Activated T-helper 2 cell treated with anti-CD3 and anti-CD28 coated beads, Interferon-gamma antibody, Interleukin-2, Interleukin-4, amounts not matched to agents 10 μg/mL and 5 μg/mL and 100 μg/mL, durations not matched to agents 14 hours and 24 hours and 36 hours (primary cell): ENCODE measurements at regions of chr3 and their contacts with region 1.

Region 1: DNA sequence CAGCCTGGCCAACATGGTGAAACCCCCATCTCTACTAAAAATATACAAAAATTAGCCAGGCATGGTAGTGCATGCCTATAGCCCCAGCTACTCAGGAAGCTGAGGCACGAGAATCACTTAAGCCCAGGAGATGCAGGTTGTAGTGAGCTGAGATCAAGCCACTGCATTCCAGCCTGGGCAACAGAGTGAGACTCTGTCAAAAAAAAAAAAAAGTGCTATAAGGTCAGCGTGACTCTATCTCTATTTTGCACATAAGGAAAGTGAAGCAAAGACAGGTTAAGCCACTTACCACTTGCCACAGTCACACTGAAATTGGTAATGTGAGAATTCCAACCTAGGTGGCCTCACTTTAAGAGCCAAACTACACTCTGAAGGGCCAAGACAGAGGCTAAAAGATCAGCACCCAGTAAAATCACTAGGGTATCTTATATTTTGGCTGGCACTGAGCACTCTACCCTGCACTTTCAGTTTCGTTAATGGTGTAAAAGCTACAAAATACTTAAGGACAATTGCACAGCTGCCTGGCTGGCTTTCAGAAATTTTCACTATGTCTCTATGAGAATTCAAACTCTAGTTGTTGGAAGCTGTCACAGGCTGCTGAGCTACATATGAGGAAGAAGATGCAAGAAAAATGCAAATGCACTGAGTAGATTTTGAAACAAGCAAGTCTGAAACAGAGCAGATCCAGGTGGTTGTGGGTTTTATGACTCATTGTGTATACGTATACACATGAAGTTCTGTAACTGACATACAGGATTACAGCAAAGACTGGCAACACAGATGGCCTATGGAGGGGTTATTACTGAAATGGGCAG is 32.7 kb downstream of the TRANK1 start:
- DNase-seq: peak; percentile 31
- H3K4me3 Mint-ChIP-seq: peak overlapping the region; percentile 41
- H3K27ac Mint-ChIP-seq: peak overlapping the region; percentile 20
- H3K4me1 Mint-ChIP-seq: peaks cover 40% of the 10 kb centered on the region
- H3K27me3 Mint-ChIP-seq: peaks cover 3% of the 10 kb centered on the region

Region 2: DNA sequence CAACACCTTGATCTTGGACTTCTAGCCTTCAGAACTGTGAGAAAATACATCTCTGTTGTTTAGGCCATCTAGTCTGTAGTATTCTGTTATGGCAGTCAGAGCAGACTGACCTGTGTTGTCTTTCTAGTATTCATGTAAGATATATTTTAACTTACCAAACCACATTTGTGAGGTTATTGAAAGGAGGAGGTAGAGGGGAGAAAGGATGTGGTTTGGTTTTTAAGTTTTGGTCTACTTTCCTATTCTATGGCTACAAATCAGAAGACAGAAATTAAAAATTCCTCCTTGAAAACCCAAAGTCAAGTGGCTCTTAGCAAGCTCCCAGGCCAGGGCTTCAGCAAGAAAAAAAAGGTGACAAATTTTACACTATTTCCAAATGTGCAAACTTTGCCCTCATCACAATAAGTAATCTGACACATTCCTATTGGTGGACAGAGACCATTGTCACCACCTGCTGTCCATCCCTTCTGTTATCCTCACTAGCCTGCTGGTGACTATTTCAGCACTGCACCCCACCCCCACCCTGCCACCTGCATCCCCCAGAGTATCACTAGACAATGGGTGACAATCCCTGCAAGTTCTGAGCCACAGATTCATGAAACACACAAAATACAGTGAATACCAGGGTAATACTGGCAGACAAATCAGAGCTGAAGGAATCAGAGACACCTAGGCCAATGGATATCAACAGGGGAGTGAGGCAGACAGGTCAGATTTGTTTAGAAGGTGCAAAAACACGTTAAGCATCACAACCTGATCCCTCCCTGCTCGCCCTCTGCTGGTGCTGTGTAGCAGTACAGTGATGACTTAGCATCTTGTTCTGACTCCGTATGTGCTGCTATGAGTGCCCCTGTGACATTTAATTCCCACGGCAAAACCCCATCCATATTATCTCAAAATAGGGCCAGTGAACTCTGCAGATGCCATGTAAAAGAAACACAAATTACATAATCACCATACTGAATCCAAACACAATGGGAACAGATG is 68.8 kb before region 1 on chr3:
- intact Hi-C with region 1: loop called (anchors 2 kb)
- DNase-seq: peak; percentile 36
- H3K4me3 Mint-ChIP-seq: peak overlapping the region; percentile 6
- H3K27ac Mint-ChIP-seq: no peak overlapping the region
- H3K4me1 Mint-ChIP-seq: peaks cover 30% of the 10 kb centered on the region
- H3K27me3 Mint-ChIP-seq: peaks cover 2% of the 10 kb centered on the region

Region 3: GRCh38 chr3:36876181-36876936 is 35.8 kb before region 1 on chr3:
- intact Hi-C with region 1: loop called (anchors 1 kb)
- DNase-seq: peak; percentile 28
- H3K4me3 Mint-ChIP-seq: peak overlapping the region; percentile 48
- H3K27ac Mint-ChIP-seq: peak overlapping the region; percentile 72
- H3K4me1 Mint-ChIP-seq: peaks cover 27% of the 10 kb centered on the region
- H3K27me3 Mint-ChIP-seq: peaks cover 20% of the 10 kb centered on the region

Region 4: DNA sequence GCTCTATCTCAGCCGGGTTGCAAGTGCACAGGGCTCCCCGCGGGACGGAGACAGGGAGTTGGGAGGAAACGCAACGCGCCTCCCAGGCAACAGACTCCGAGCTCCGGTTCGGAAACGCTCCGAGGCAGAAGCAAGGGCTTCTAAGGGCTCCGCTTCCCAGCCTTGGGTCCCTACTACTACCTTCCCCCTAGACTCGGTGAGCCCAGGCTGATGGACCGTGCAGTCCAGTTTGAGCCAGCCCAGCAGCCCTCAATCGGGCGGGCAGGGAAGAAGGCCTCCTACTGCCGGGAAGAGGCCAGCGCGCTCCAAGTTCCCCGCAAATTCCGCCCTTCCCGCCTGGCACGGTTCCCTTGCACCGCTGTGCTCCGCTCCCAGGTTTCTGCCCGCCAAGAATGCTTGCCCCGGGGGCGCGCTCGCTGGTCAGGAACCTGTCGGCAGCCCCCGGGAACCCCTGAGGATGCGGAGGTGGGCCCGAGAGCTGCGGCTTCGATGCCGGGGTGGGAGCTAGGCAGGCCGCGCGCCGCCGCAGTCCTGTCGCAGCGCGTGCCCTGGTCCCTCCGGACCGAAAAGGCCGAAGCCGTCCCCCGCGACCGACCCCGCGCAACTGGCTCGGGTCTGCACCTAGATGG is 31.9 kb after region 1 on chr3:
- intact Hi-C with region 1: loop called (anchors 2 kb)
- DNase-seq: peak; percentile 13
- H3K4me3 Mint-ChIP-seq: peak overlapping the region; percentile 51
- H3K27ac Mint-ChIP-seq: no peak overlapping the region
- H3K4me1 Mint-ChIP-seq: peaks cover 10% of the 10 kb centered on the region
- H3K27me3 Mint-ChIP-seq: peaks cover 34% of the 10 kb centered on the region

Region 5: DNA sequence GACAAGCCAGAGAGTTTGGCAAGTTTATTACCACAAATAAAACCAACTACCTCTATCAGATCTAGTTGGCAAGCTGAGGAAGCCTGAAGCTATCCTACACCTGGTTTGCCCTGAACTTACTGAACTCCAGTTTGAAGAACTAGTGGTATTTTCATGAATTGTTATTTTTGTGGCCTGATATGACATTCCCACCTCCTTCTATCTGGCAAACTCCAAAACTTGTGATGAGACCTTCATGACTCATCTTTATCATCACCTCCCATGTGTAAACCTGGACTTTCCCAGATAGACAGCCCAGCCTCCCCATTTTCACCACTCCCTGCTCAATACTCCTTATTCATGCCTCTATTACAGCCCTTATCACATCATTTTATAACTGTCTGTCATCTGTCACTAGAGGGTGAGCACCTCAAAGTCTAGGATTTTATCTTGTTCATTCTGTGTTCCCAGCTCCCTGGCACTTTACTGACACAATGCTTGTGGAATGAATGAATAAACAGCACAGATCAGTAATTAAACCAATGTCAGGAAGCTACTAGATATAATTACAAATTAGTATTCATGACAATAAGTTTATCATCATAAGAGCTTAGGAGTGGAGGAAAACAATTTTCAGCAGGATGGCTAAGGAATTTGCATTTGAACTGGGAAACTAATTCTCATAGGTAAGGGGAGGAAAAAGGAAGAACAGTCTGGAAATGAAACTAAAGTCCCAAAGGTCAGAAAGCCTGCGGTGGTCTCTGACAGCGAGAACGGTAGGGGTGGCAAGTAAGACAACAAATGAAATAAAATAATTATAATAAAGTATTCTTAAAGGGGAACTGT is 45.9 kb after region 1 on chr3:
- intact Hi-C with region 1: loop called (anchors 1 kb)
- DNase-seq: no peak
- H3K4me3 Mint-ChIP-seq: no peak overlapping the region
- H3K27ac Mint-ChIP-seq: no peak overlapping the region
- H3K4me1 Mint-ChIP-seq: peaks cover 12% of the 10 kb centered on the region
- H3K27me3 Mint-ChIP-seq: peaks cover 4% of the 10 kb centered on the region

Region 6: GRCh38 chr3:37163262-37164015 is 251.2 kb after region 1 on chr3:
- intact Hi-C with region 1: loop called (anchors 5 kb)
- DNase-seq: no peak
- H3K4me3 Mint-ChIP-seq: peak overlapping the region; percentile 20
- H3K27ac Mint-ChIP-seq: peak overlapping the region; percentile 72
- H3K4me1 Mint-ChIP-seq: peaks cover 30% of the 10 kb centered on the region
- H3K27me3 Mint-ChIP-seq: no peaks in the 10 kb centered on the region

Region 7: GRCh38 chr3:37320276-37320675 is 408.1 kb after region 1 on chr3:
- intact Hi-C with region 1: loop called (anchors 5 kb)
- DNase-seq: no peak
- H3K4me3 Mint-ChIP-seq: no peak overlapping the region
- H3K27ac Mint-ChIP-seq: peak overlapping the region; percentile 74
- H3K4me1 Mint-ChIP-seq: peaks cover 17% of the 10 kb centered on the region
- H3K27me3 Mint-ChIP-seq: no peaks in the 10 kb centered on the region